GM13976 (cell line): ENCODE measurements at regions of chr15 and their contacts with region 1.

Region 1: GRCh38 chr15:98658831-98659699 is 10.7 kb downstream of the IGF1R start:
- DNase-seq: peak; percentile 69
- CTCF ChIP-seq: peak; percentile 87

Region 2: GRCh38 chr15:98484908-98485307 is 174.2 kb before region 1 on chr15:
- in situ Hi-C with region 1: no loop called
- DNase-seq: no peak
- CTCF ChIP-seq: no peak

Region 3: DNA sequence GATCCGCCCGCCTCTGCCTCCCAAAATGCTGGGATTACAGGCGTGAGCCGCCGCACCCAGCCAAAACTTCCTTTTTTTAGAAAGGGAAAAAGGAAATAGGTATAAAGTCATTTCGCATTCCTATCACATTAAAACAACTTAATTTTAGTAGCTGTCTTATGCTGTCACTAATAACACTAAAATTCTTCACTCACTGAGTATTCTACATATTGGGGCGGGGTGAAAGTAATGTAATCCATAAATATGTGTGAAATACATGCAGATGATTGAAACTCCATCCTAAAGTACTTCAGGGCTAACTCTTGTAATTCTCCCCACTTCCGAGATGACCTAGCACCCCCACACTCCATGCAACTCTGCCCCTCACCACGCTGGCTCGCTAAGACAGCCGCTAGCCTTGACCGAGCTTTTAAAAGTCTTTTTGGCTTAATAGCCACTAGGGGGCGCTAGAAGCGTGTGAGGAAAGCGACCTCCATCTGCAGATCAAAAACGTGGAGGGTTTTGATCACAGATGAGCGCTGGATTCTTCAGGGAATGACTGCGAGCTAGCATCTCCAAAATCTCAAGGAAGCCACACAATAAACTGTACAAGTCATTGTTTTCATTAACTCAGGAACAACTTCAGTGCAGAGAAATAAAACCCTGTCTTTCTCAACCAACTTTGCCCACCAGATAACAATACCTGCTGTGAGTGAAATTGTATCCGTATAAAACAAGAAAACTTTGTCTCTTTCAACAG is 140.1 kb before region 1 on chr15:
- in situ Hi-C with region 1: loop called (anchors 5 kb)
- DNase-seq: peak; percentile 80
- CTCF ChIP-seq: peak; percentile 44